ENCODE measurements at regions of chr3 and their contacts with region 1.

Region 1: GRCh38 chr3:168847291-168847883 is 751.7 kb upstream of the GOLIM4 start:
- DNase-seq: peak; percentile 68
- H3K4me3 ChIP-seq: no peak overlapping the region
- H3K27ac ChIP-seq: no peak overlapping the region
- H3K4me1 ChIP-seq: no peaks in the 10 kb centered on the region
- H3K27me3 ChIP-seq: peaks cover 21 to 36% of the 10 kb centered on the region in 2 experiments
- CTCF ChIP-seq: peak; percentile 43 to 45
- POLR2A ChIP-seq: no peak

Region 2: DNA sequence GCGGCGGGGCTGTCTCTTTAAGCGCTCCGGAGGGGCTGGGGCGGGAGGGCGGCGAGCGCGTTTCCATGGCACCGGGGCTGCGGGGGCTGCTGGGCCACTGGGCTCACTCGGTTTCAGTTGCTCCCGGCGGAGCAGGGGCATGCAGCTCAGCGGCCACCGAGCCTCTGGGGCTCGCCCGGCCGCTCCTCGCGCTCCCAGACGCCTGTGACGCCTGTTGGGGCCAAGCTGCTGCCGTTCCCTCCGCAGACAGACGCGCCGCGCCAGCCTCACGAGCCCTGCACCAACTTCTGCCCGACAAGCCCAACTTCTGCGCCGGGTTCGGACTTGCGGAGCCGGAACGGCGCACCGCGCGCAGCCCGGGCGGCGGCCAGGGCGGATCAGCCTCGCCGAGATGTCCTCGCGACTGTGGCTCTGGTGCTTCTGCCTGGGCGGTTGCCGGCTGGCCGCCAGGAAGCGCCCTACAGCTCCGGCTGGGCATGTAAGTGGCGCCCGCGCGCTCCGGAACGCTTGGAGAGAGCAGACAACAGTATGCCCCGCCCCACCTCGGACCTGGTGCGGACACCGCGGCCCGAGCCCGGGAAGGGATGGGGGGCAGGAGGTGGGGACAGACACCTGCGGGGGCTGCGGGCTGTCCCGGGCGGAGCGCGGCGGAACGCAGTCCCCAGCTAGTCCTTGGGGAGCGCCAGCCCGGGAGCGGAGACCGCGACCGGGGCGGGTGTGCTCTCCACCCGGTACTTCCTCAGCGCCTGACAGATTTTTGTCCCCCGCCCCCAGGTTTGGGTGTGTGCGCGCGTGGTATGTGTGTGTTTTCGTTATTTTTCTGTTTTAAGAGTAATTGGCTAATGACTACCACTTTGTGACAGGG is 597.6 kb before region 1 on chr3:
- CTCF ChIA-PET with region 1: interaction called, 16 read pairs
- POLR2A ChIA-PET with region 1: no interaction called
- dilution Hi-C with region 1: no loop called
- intact Hi-C with region 1: loop called (anchors 1 kb)
- DNase-seq: peak; percentile 72
- H3K4me3 ChIP-seq: peak overlapping the region; percentile 33 to 60 (median 53)
- H3K27ac ChIP-seq: no peak overlapping the region
- H3K4me1 ChIP-seq: peaks cover 16% of the 10 kb centered on the region
- H3K27me3 ChIP-seq: peaks cover 29 to 60% of the 10 kb centered on the region in 2 experiments
- CTCF ChIP-seq: peak; percentile 14 to 34
- POLR2A ChIP-seq: no peak

Region 3: DNA sequence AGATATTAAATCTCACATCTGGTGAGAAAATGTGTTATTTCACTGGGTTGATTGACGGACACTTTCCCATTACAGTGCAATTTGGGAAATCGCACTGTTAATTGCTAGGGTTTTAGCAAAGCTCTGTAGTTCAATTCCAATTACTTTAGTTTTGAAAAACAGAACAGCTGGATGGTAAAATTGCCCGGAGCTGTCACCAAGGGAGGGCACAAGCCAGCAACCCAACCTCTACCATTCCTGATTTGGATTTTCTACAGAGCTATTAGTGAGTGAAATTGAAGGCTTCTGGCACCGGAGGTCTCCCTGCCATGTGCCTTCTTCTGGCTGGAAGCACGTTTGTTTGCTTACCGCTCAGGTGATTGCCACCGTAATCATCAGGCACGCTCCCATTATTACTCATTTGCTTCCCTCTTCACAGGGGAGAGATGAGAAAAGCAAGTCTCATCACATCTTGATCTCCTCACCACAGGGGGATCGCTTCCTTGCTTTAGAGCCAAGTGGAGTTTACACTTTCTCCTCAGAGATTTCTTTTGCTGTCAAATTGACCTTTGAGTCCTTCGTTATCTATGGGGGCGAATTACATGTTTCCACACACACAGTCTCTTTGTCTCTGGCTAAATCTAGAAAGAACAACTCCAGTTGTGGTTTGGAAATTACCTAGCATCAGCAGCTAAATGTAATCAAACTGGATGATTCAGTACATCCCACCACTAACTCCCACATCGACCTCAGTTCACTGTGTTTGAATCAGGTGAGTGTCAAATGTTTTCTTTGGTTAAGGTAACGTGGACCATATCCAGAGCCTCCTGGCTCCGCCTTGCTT is 329.9 kb before region 1 on chr3:
- CTCF ChIA-PET with region 1: interaction called, 52 read pairs
- POLR2A ChIA-PET with region 1: no interaction called
- dilution Hi-C with region 1: no loop called
- intact Hi-C with region 1: no loop called
- DNase-seq: no peak
- H3K4me3 ChIP-seq: no peak overlapping the region
- H3K27ac ChIP-seq: no peak overlapping the region
- H3K4me1 ChIP-seq: no peaks in the 10 kb centered on the region
- H3K27me3 ChIP-seq: peaks cover 2 to 8% of the 10 kb centered on the region in 2 experiments
- CTCF ChIP-seq: no peak
- POLR2A ChIP-seq: no peak

Region 4: DNA sequence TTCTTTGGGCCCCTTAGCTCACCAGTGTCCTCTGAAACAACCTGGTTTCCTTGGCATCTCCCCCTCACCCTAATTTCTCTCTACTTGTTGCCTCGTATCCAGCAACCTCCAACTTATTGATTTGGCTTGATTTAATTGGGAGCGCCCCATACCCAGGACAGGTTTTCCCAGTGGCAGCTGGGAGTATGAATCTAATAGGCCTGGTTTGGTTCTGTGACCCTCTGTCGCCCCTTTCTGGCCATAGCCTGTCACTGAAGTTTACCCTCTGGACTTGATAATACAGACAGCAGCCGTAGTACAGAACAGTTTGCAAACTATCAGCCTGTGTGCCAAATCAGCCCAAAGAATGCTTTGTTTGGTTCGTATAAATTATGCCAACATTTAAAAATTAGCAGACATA is 226.6 kb before region 1 on chr3:
- CTCF ChIA-PET with region 1: interaction called, 33 read pairs
- POLR2A ChIA-PET with region 1: no interaction called
- dilution Hi-C with region 1: no loop called
- intact Hi-C with region 1: loop called (anchors 5 kb)
- DNase-seq: peak; percentile 13
- H3K4me3 ChIP-seq: no peak overlapping the region
- H3K27ac ChIP-seq: no peak overlapping the region
- H3K4me1 ChIP-seq: no peaks in the 10 kb centered on the region
- H3K27me3 ChIP-seq: peaks cover 2 to 16% of the 10 kb centered on the region in 2 experiments
- CTCF ChIP-seq: peak; percentile 36 to 43
- POLR2A ChIP-seq: no peak

Region 5: DNA sequence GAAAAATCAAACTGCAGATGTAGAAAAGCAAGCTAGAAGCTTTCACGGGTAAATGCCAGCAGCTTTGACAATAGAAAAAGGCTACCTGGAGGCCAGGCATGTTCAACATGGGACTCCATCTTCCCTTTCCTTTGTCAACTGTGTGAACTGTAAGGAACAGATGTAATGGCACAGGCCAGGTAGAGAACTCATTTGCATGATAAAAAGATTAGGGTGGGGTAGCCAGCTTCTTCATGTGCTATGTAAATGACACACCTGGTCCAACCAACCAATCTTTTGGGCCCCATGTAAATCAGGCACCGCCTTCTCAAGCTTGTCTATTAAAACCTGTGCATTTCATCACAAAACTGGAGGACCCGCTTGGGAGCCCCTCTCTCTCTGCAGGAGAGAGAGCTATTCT is 65.2 kb before region 1 on chr3:
- CTCF ChIA-PET with region 1: interaction called, 12 read pairs
- POLR2A ChIA-PET with region 1: no interaction called
- dilution Hi-C with region 1: no loop called
- intact Hi-C with region 1: no loop called
- DNase-seq: no peak
- H3K4me3 ChIP-seq: no peak overlapping the region
- H3K27ac ChIP-seq: no peak overlapping the region
- H3K4me1 ChIP-seq: no peaks in the 10 kb centered on the region
- H3K27me3 ChIP-seq: no peaks in the 10 kb centered on the region
- CTCF ChIP-seq: no peak
- POLR2A ChIP-seq: no peak

Region 6: DNA sequence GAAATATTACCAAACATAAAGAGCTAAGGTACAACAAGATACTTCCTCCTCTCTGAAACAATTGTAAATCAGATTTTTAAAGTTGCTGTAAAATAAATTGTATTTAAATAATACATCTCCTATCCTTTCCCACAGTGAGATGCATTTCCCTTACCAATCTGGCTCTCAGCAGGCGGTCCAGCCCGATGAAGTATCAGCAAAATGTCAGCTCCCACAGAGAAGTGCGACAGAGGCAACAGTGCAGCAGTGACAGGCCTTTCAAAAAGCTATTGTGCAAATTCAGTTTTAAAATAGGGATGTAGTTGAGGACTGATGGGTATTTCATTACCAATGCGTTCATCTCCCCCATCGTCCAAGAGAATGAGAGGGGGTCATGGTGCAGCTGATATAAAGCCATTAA is 18.4 kb before region 1 on chr3:
- CTCF ChIA-PET with region 1: interaction called, 23 read pairs
- POLR2A ChIA-PET with region 1: no interaction called
- dilution Hi-C with region 1: no loop called
- intact Hi-C with region 1: no loop called
- DNase-seq: no peak
- H3K4me3 ChIP-seq: no peak overlapping the region
- H3K27ac ChIP-seq: no peak overlapping the region
- H3K4me1 ChIP-seq: no peaks in the 10 kb centered on the region
- H3K27me3 ChIP-seq: no peaks in the 10 kb centered on the region
- CTCF ChIP-seq: no peak
- POLR2A ChIP-seq: no peak

Region 7: GRCh38 chr3:169310184-169310939 is 463.0 kb after region 1 on chr3:
- CTCF ChIA-PET with region 1: no interaction called
- POLR2A ChIA-PET with region 1: no interaction called
- dilution Hi-C with region 1: no loop called
- intact Hi-C with region 1: no loop called
- DNase-seq: no peak
- H3K4me3 ChIP-seq: no peak overlapping the region
- H3K27ac ChIP-seq: no peak overlapping the region
- H3K4me1 ChIP-seq: peaks cover 37% of the 10 kb centered on the region
- H3K27me3 ChIP-seq: no peaks in the 10 kb centered on the region
- CTCF ChIP-seq: no peak
- POLR2A ChIP-seq: no peak